Uterus (tissue), 4 donors: ENCODE measurements at regions of chr9 and their contacts with region 1.

Region 1: GRCh38 chr9:72371151-72371550 is 6.1 kb upstream of the ZFAND5 start:
- DNase-seq: no peak
- H3K4me3 ChIP-seq: no peak overlapping the region
- H3K27ac ChIP-seq: no peak overlapping the region
- H3K4me1 ChIP-seq: no peaks in the 10 kb centered on the region
- H3K27me3 ChIP-seq: no peaks in the 10 kb centered on the region
- CTCF ChIP-seq: no peak
- POLR2A ChIP-seq: no peak

Region 2: DNA sequence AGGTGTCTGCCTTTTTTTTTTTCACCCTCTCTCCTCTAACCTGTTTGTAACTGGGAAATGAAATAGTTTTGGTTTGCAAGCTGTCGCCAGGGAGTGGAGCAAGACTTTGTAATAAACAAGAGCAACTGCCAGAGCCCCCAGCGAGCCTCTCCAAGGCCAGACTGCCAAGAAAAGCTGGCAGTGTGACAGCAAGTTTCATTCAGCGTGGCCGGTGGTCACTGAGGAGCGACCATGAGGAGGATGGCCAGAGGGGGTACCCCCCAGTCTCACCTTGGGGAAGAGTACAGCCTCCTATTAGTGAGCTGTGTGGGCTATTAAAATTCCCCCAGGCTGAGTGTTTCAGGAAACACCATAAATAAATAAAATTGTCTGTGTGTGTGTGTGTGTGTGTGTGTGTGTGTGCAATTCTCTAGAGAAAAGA is 56.1 kb before region 1 on chr9:
- intact Hi-C with region 1: no loop called
- DNase-seq: peak; percentile 52 to 64
- H3K4me3 ChIP-seq: peak overlapping the region in 1 of 2 donors; percentile 18
- H3K27ac ChIP-seq: peak overlapping the region; percentile 69 to 75
- H3K4me1 ChIP-seq: no peaks in the 10 kb centered on the region
- H3K27me3 ChIP-seq: no peaks in the 10 kb centered on the region
- CTCF ChIP-seq: no peak
- POLR2A ChIP-seq: no peak

Region 3: DNA sequence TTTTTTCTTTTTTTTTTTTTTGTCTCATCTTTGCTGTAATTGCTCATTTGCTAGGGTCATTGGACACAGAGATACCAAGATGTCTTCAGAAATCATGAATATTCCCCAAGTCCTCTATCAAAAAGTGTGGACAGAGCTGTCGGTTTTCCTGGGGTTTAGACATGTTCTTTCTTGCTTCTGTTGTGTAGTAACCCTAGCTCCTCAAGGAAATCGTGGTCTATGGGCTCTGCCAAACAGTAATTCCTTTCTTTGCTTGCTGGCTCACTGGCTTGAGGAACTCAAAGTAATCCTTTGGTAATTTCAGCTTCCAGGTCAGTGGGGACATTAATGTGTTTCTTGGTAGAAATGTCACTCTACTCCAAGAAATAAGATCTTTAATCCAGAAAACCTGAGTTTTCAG is 252.0 kb after region 1 on chr9:
- intact Hi-C with region 1: no loop called
- DNase-seq: no peak
- H3K4me3 ChIP-seq: no peak overlapping the region
- H3K27ac ChIP-seq: no peak overlapping the region
- H3K4me1 ChIP-seq: no peaks in the 10 kb centered on the region
- H3K27me3 ChIP-seq: no peaks in the 10 kb centered on the region
- CTCF ChIP-seq: no peak
- POLR2A ChIP-seq: no peak

Region 4: DNA sequence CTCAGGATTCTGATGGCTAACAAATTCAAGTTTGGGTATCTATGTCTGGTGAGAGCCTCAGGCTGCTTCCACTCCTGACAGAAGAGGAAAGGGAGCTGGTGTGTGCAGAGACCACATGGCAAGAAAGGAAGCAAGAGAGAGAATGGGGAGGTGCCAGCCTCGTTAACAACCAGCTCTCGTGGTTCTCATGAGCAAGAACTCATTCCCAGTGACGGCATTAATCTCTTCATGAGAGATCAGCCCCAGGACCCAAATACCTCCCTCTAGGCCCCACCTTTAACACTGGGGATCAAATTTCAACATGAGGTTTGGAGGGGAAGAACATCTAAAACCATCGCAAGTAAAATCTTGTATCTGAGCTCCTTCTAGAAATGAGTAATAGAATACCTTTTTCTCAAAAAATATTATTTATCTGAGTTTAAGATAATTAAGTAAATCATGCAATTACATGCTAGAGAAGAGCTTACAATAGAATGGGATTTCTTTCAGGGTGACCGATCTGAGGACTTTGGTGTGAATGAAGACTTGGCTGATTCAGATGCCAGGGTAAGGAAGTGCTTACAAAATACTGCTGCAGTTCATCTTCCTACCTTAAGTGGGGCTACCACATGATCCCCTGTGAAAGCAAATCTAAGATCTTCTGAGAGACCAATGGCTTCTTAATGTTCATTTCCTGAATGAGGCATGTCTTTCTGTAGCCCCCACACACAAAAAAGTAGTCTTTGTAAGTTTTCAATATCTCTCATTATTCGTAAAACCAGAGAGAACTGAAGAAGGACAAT is 792.0 kb after region 1 on chr9:
- intact Hi-C with region 1: loop called (anchors 10 kb)
- DNase-seq: no peak
- H3K4me3 ChIP-seq: no peak overlapping the region
- H3K27ac ChIP-seq: no peak overlapping the region
- H3K4me1 ChIP-seq: no peaks in the 10 kb centered on the region
- H3K27me3 ChIP-seq: no peaks in the 10 kb centered on the region
- CTCF ChIP-seq: no peak
- POLR2A ChIP-seq: no peak